ENCODE measurements at regions of chr2 and their contacts with region 1.

Region 1: DNA sequence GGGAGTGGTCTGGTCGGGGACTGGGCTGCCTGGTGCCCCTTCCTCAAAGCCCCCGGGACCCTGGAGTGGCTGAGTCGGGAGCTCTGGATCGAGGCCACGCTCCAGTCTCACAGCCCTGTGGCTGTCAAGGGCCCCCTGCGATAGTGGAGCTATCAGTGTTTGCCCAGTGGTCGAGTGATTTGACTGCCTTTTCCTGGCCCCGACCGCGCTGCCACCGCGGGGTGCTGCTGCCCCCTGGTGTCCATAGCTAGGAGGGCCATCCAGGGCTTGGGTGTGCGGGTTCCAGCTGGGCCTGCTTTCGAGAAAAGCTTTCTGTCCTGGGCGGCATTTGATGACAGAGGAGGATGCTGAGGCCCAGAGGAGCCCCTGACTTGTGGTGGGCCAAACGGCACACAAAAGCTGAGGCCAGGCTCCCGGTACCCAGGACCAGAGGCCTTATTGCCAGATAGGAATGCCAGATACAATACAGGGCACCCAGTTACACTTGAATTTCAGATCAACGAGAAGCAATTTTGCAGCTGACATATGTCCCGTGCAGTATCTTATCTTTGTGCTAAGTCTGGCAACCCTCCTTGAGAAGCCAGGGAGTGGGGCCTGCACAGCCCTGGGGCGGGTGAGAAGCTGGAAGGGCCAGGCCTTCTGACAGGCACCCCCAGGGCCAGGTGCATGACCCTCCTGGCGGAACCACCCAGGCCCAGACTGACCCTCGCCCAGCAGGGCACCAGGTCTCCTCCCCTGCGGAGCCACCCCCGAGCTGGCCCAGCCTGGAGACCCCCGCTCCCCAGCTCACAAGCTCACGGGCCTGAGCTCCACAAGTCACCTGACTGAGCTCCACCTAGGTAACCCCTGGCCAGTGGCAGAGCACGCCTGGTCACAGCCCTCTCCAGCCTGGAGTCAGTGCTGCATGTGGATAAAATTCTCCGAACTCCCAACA is 13.0 kb downstream of the ODC1 start:
- DNase-seq: peak in 9 of 10 donors; percentile 55 to 85 (median 69)
- H3K4me3 ChIP-seq: no peak overlapping the region
- H3K27ac ChIP-seq: no peak overlapping the region
- H3K27me3 ChIP-seq: peaks cover 0 to 11% (median 0%) of the 10 kb centered on the region in 45 donors
- CTCF ChIP-seq: peak; percentile 66 to 99 (median 96)

Region 2: GRCh38 chr2:10072656-10073480 is 362.3 kb before region 1 on chr2:
- intact Hi-C with region 1: loop called (anchors 5 kb)
- DNase-seq: peak; percentile 51 to 90 (median 78)
- H3K4me3 ChIP-seq: peak overlapping the region in 9 of 59 donors; percentile 5 to 28 (median 12)
- H3K27ac ChIP-seq: peak overlapping the region in 13 of 59 donors; percentile 6 to 80 (median 50)
- H3K27me3 ChIP-seq: peaks cover 0 to 30% (median 0%) of the 10 kb centered on the region in 45 donors
- CTCF ChIP-seq: peak; percentile 73 to 91 (median 84)

Region 3: DNA sequence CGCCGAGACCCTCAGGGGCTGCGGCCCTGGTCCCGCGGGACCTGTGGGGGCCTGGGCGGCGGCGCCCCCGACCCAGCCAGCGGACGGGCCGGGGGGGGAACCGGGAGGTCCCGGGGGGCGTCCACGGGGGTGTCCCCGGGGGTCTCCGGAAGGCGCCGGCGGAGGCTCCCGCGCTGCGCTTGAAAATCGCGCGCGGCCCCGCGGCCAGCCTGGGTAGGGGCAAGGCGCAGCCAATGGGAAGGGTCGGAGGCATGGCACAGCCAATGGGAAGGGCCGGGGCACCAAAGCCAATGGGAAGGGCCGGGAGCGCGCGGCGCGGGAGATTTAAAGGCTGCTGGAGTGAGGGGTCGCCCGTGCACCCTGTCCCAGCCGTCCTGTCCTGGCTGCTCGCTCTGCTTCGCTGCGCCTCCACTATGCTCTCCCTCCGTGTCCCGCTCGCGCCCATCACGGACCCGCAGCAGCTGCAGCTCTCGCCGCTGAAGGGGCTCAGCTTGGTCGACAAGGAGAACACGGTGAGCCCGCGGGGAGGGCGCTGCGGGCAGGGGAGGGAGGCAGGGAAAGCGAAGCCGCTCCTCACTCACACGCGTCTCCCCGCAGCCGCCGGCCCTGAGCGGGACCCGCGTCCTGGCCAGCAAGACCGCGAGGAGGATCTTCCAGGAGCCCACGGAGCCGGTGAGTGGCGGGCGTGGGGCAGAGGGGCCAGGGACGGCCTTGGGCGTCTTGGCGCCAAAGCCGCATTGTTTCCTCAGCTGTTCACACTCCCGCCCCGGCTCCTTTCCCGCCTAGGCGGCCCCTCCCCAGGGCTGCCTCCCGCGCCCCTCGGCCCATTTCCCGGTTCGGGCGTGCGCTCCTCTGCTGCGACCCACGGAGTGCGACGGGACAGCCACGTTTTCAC is 312.5 kb before region 1 on chr2 and contains the start of gene RRM2:
- intact Hi-C with region 1: loop called (anchors 1 to 5 kb)
- DNase-seq: peak; percentile 87 to 95 (median 92)
- H3K4me3 ChIP-seq: peak within 1 kb of the TSS; percentile 41 to 78 (median 61)
- H3K27ac ChIP-seq: no peak within 1 kb of the TSS
- H3K27me3 ChIP-seq: peaks cover 0 to 31% (median 18%) of the 10 kb centered on the region in 45 donors
- CTCF ChIP-seq: peak in 8 of 56 donors; percentile 3 to 23 (median 12)
- total RNA-seq, gene RRM2: 0.11 to 3.3 (median 0.83) TPM in 45 of 120 experiments, not detected in the others

Region 4: GRCh38 chr2:10382354-10383061 is 52.6 kb before region 1 on chr2:
- intact Hi-C with region 1: no loop called
- DNase-seq: no peak
- H3K4me3 ChIP-seq: peak overlapping the region in 1 of 59 donors; percentile 16
- H3K27ac ChIP-seq: no peak overlapping the region
- H3K27me3 ChIP-seq: no peaks in the 10 kb centered on the region
- CTCF ChIP-seq: no peak